ENCODE measurements at regions of chr9 and their contacts with region 1.

Region 1: GRCh38 chr9:112443200-112443599 is 43.4 kb upstream of the KIAA1958 start:
- DNase-seq: no peak
- H3K4me3 ChIP-seq: no peak overlapping the region
- CTCF ChIP-seq: peak; percentile 34

Region 2: GRCh38 chr9:112520656-112521055 is 77.5 kb after region 1 on chr9:
- CTCF ChIA-PET with region 1: no interaction called
- POLR2A ChIA-PET with region 1: no interaction called
- DNase-seq: no peak
- H3K4me3 ChIP-seq: no peak overlapping the region
- CTCF ChIP-seq: no peak

Region 3: GRCh38 chr9:112665347-112665746 is 222.1 kb after region 1 on chr9:
- CTCF ChIA-PET with region 1: interaction called, 46 read pairs
- POLR2A ChIA-PET with region 1: interaction called, 4 read pairs
- DNase-seq: no peak
- H3K4me3 ChIP-seq: no peak overlapping the region
- CTCF ChIP-seq: no peak

Region 4: GRCh38 chr9:112705768-112706427 is 262.7 kb after region 1 on chr9:
- CTCF ChIA-PET with region 1: interaction called, 52 read pairs
- POLR2A ChIA-PET with region 1: no interaction called
- DNase-seq: no peak
- H3K4me3 ChIP-seq: no peak overlapping the region
- CTCF ChIP-seq: peak; percentile 44

Region 5: GRCh38 chr9:112711050-112711689 is 268.0 kb after region 1 on chr9:
- CTCF ChIA-PET with region 1: interaction called, 52 read pairs
- POLR2A ChIA-PET with region 1: no interaction called
- DNase-seq: no peak
- H3K4me3 ChIP-seq: no peak overlapping the region
- CTCF ChIP-seq: peak; percentile 57